Heart right ventricle (tissue), 16 donors: ENCODE measurements at regions of chr11 and their contacts with region 1.

Region 1: DNA sequence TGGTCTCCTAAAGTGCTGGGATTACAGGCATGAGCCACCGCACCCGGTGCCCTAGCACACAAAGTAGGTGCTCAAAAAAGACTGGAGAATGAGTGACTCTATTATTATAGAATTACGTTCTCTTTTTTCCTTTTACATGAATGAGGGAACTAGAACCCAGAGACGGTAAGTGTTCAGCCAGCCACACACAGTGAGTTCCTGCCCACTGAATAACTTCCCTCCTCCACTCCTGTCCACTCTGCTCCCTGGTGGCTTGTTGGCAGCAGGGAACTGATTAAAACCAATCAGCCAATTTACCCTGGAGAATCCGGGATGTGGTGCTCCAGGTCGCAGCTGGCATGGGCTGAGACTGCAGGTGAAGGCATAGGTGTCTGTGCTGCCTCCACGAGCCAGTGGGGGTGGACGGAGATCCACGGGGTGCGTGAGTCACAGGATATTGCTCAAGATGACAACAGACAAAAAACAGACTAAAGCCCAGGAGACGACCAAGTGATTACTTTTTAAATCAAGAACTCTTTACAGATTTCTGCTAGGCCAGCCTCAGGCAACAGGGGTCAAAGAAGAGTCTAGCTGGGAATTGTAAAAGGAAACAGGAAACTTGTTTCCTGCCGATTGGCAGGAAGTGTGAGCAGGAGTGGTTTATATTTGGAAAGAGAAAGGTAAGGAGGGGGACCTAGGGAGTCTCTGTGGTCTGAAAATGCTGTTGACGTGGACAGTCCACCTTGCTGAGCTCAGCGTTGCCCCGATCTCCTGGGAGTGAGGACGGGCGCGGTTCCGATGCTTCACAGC is 95.2 kb upstream of the TP53I11 start:
- DNase-seq: peak; percentile 45 to 59
- ATAC-seq: peak; percentile 28 to 64 (median 54)
- H3K4me3 ChIP-seq: no peak overlapping the region
- H3K27ac ChIP-seq: peak overlapping the region in 9 of 10 donors; percentile 40 to 90 (median 75)
- H3K4me1 ChIP-seq: peaks cover 19 to 64% (median 51%) of the 10 kb centered on the region in 9 donors
- H3K27me3 ChIP-seq: no peaks in the 10 kb centered on the region
- CTCF ChIP-seq: peak in 3 of 9 donors; percentile 8 to 17 (median 11)

Region 2: GRCh38 chr11:45089676-45090499 is 44.0 kb after region 1 on chr11:
- intact Hi-C with region 1: loop called in 1 of 10 experiments (anchors 5 kb)
- DNase-seq: no peak
- ATAC-seq: peak in 7 of 8 donors; percentile 5 to 20 (median 7)
- H3K4me3 ChIP-seq: no peak overlapping the region
- H3K27ac ChIP-seq: peak overlapping the region in 9 of 10 donors; percentile 56 to 85 (median 74)
- H3K4me1 ChIP-seq: peaks cover 0 to 70% (median 40%) of the 10 kb centered on the region in 9 donors
- H3K27me3 ChIP-seq: no peaks in the 10 kb centered on the region
- CTCF ChIP-seq: peak in 5 of 9 donors; percentile 10 to 26 (median 25)

Region 3: DNA sequence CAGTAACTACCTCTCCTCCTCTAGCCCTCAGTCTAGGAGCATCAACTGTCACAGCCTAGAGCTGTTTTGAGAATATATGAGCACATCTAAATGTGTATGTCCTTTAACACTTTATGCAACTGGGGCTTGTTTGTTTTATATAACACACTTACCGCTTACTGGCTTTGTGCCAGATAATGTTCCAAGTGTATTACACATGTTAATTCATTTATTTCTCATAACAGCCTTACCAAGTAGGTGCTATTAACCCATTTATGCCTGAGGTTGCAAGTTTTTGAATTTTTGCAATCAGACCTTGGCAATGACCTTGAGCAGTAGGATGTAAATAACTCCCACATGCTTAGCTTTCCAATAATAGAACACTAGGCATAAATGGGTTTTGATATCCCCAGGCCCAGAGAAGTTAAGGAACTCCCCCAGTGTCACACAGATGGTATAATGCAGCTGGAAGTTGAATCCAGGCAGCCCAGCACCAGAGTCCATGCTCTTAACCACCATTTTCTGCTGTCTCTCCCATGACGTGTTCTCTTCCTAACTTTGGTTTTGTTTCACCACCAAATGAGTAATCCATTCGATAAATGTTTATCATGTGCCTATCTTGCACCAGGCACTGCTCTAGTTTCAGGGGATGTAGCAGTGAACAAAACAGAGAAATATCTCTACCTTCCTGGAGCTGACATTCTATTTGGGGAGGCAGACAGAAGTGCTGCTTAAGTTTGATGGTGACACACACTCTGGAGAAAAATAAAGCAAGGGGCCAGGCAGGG is 123.6 kb after region 1 on chr11:
- intact Hi-C with region 1: no loop called
- DNase-seq: no peak
- ATAC-seq: no peak
- H3K4me3 ChIP-seq: no peak overlapping the region
- H3K27ac ChIP-seq: peak overlapping the region in 1 of 10 donors; percentile 9
- H3K4me1 ChIP-seq: peaks cover 0 to 41% (median 15%) of the 10 kb centered on the region in 9 donors
- H3K27me3 ChIP-seq: no peaks in the 10 kb centered on the region
- CTCF ChIP-seq: no peak

Region 4: GRCh38 chr11:45365961-45366618 is 320.2 kb after region 1 on chr11:
- intact Hi-C with region 1: no loop called
- DNase-seq: no peak
- ATAC-seq: peak in 4 of 8 donors; percentile 42 to 70 (median 60)
- H3K4me3 ChIP-seq: no peak overlapping the region
- H3K27ac ChIP-seq: no peak overlapping the region
- H3K4me1 ChIP-seq: peaks cover 0 to 3% (median 0%) of the 10 kb centered on the region in 9 donors
- H3K27me3 ChIP-seq: peaks cover 0 to 34% (median 14%) of the 10 kb centered on the region in 7 donors
- CTCF ChIP-seq: no peak